ENCODE measurements at regions of chr22 and their contacts with region 1.

Region 1: GRCh38 chr22:40512426-40513136 is 123.9 kb downstream of the MRTFA start:
- DNase-seq: peak; percentile 48 to 76
- H3K4me3 ChIP-seq: no peak overlapping the region
- H3K27ac ChIP-seq: peak overlapping the region; percentile 79 to 86
- H3K4me1 ChIP-seq: peaks cover 15 to 99% (median 57%) of the 10 kb centered on the region in 4 donors
- H3K27me3 ChIP-seq: no peaks in the 10 kb centered on the region
- CTCF ChIP-seq: no peak

Region 2: GRCh38 chr22:40203572-40203971 is 309.0 kb before region 1 on chr22:
- intact Hi-C with region 1: no loop called
- DNase-seq: no peak
- H3K4me3 ChIP-seq: no peak overlapping the region
- H3K27ac ChIP-seq: peak overlapping the region; percentile 17 to 48
- H3K4me1 ChIP-seq: peaks cover 0 to 66% (median 28%) of the 10 kb centered on the region in 4 donors
- H3K27me3 ChIP-seq: no peaks in the 10 kb centered on the region
- CTCF ChIP-seq: no peak

Region 3: DNA sequence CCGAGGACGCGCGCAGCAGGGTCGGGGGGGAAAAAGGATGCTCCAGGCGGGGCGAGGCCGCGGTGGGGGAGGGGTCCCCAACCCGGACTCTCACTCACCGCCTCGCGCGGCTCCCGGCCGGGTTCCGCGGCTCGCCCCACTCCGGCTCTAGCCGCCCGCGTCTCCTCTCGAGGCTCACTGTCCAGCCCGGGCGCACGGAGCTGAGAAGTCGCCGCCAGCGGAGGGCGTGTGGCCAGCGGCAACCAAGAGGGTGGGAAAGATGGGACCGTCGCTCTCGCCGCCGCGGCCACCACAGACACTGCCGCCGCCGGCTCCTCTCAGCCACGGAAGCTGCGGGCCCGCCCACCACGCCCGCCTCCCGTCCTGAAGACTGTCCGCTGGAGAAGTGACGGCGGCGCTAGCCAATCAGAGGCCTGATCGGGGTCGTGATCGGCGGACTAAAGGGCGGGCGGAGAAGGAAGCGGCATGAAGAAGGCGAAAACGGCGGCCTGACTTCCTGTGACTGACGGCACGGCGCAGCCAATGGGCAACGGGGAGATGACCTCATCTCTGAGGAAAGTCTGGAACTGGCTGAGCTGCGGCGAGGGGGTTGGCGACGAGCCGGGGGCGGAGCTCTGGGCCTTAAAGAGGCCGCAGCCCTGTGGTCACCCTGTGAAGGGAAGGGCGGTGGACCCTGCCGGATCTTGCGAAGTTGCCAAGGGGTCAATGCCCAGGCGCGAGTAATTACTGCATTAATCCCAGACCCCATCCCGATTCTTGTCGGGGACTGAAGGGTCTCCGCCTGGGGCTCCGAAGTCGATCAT is 124.0 kb after region 1 on chr22 and contains the start of gene MRTFA:
- intact Hi-C with region 1: no loop called
- DNase-seq: peak; percentile 100
- H3K4me3 ChIP-seq: peak within 1 kb of the TSS; percentile 65 to 83
- H3K27ac ChIP-seq: peak within 1 kb of the TSS; percentile 83 to 89
- H3K4me1 ChIP-seq: peaks cover 0 to 39% (median 16%) of the 10 kb centered on the region in 4 donors
- H3K27me3 ChIP-seq: no peaks in the 10 kb centered on the region
- CTCF ChIP-seq: no peak

Region 4: GRCh38 chr22:40651563-40652501 is 139.3 kb after region 1 on chr22:
- intact Hi-C with region 1: loop called (anchors 2 kb)
- DNase-seq: peak; percentile 98 to 99
- H3K4me3 ChIP-seq: peak overlapping the region; percentile 63 to 75
- H3K27ac ChIP-seq: peak overlapping the region; percentile 97 to 98
- H3K4me1 ChIP-seq: peaks cover 0 to 40% (median 30%) of the 10 kb centered on the region in 4 donors
- H3K27me3 ChIP-seq: no peaks in the 10 kb centered on the region
- CTCF ChIP-seq: peak in 1 of 2 experiments; percentile 17